Dorsolateral prefrontal cortex (tissue), 120 donors: ENCODE measurements at regions of chr2 and their contacts with region 1.

Region 1: GRCh38 chr2:74429487-74430451 is 8.2 kb downstream of the WDR54 start:
- DNase-seq: peak in 1 of 10 donors; percentile 25
- H3K4me3 ChIP-seq: no peak overlapping the region
- H3K27ac ChIP-seq: peak overlapping the region in 1 of 59 donors; percentile 12
- H3K27me3 ChIP-seq: no peaks in the 10 kb centered on the region
- CTCF ChIP-seq: no peak

Region 2: DNA sequence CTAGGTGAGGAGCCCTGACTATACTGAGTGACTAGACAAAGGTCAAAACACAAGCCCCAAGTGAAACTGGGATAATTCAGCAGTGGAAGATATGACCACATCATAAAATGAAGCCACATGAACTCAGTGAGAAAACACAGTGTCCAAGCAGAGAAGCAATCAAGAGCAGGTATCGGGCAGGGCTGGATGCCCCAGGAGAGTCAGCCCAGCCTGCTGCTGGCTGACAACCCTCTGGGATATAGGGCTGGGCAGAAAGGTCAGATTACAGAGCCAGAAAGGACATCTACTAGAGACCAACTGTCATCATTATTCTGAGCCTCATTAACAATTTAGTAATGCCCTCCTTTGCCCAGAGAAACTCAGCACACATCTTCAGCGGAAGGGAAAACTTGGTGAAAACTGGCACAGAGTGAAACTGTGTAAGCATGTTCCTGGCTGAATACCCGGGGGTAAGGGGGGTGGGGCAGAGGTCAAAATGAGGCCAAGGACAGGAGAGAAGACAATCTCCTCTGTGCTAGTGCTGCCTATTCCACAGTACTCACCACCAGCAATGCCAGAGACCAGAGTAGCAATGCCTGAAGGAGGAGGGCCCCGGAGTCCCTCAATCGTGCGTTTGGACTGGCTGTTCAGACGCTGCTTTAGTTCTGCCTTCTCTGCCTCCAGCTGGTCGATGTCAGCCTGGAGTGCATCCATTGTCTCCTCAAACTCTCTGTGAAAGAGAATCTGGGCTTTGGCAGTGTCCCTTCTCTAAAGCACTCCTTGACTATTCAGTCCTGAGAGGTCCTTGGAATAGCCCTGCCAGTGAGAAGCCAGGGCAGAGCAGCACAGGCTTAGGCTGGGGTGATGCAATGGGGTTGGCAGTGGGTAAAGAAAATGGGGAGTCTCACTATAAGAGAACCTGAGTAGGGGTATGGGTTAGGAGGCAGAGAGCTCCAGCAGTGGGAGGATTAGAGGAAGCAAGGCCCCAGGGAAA is 65.0 kb before region 1 on chr2:
- intact Hi-C with region 1: no loop called
- DNase-seq: no peak
- H3K4me3 ChIP-seq: no peak overlapping the region
- H3K27ac ChIP-seq: peak overlapping the region in 42 of 59 donors; percentile 0 to 71 (median 36)
- H3K27me3 ChIP-seq: no peaks in the 10 kb centered on the region
- CTCF ChIP-seq: no peak

Region 3: DNA sequence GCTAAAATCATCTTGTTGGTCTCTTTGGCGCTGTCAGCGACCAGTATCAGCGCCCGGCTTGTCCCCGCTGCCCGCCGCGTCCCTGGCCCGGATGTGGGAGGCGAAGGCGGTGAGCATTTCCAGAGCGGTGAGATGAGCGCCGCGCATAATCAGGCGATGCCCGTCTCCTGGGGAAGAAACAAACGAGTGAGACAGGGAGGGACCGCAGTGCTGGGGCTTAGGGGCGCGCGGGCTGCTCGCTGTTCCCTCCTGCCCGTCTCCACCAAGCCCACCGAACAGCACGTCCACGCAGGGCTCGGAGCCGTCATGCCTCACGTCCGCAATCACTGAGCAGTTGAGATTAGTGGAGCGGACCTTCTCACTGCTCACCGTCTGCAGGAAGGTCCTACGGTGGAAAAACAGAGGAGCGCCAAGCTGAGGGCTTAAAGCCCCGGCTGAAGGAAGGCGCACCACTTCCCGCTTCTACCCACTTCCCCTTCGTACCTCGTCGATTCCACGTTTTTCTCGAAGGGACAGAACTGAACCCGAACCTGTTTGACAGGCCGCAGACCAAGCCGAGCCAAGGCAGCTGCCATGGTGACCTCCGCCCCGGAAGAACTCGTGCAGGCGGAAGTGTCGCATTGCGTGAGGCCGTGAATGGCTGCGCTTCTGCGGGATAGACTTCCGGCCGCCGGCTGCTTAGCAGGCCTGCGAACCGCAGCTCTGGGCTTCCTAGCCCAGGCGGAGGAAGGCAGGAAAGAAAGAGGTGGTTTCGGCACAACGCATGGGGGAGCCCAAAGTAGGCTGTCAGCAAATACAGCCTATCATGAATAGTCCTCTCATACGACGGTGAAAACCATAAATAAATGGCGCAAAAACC is 42.5 kb after region 1 on chr2 and contains the start of gene MRPL53:
- intact Hi-C with region 1: loop called in 1 of 2 experiments (anchors 5 kb)
- DNase-seq: peak; percentile 93 to 97 (median 96)
- H3K4me3 ChIP-seq: peak within 1 kb of the TSS; percentile 56 to 98 (median 81)
- H3K27ac ChIP-seq: peak within 1 kb of the TSS; percentile 46 to 97 (median 92)
- H3K27me3 ChIP-seq: no peaks in the 10 kb centered on the region
- CTCF ChIP-seq: peak in 24 of 56 donors; percentile 10 to 51 (median 30)
- total RNA-seq, gene MRPL53: 24.1 to 59.2 (median 43.8) TPM